Activated CD8-positive, alpha-beta T cell treated with anti-CD3 and anti-CD28 coated beads, Interleukin-2, amount 10 ng/mL, durations not matched to agents 7 days and 5 days (primary cell): ENCODE measurements at regions of chr6 and their contacts with region 1.

Region 1: GRCh38 chr6:31795616-31796298 is at the start of gene VARS1:
- DNase-seq: peak; percentile 87
- ATAC-seq: peak; percentile 88
- H3K4me3 Mint-ChIP-seq: peak within 1 kb of the TSS; percentile 97
- H3K27ac Mint-ChIP-seq: peak within 1 kb of the TSS; percentile 98
- H3K4me1 Mint-ChIP-seq: peaks cover 56% of the 10 kb centered on the region
- H3K27me3 Mint-ChIP-seq: no peaks in the 10 kb centered on the region
- total RNA-seq, gene VARS1: 114 to 115 TPM

Region 2: DNA sequence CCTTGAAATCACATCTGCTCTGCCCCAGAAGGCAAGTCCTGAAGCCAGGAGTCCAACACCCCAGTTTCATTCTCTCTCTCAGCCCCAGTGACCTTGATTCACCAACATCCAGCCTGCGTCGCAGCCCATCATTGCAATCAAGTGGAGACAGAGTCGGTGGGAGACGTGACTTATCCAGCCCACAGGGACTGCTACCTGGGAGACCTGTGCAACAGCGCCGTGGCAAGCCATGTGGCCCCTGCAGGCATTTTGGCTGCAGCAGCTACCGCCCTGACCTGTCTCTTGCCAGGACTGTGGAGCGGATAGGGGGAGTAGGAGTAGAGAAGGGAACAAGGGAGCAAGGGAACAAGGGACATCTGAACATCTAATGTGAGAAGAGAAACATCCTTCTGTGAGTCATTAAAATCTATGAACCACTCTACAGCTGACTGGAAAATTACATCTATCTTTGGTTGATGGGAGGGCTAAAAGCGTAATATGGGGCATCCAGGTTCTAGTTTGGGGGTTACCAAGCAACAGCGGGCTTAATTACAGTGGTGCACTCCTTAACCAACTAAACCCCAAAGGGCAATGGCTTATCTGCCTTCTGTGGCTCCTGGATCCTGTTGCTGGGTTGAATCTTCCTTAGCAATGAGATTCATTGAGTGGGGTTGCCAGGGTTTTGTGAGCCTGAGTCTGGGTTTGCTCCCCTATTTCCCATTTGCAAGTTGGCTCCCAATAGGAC is 78.1 kb before region 1 on chr6:
- CTCF ChIA-PET with region 1: no interaction called
- POLR2A ChIA-PET with region 1: no interaction called
- DNase-seq: no peak
- ATAC-seq: no peak
- H3K4me3 Mint-ChIP-seq: no peak overlapping the region
- H3K27ac Mint-ChIP-seq: no peak overlapping the region
- H3K4me1 Mint-ChIP-seq: peaks cover 6% of the 10 kb centered on the region
- H3K27me3 Mint-ChIP-seq: peaks cover 18% of the 10 kb centered on the region

Region 3: DNA sequence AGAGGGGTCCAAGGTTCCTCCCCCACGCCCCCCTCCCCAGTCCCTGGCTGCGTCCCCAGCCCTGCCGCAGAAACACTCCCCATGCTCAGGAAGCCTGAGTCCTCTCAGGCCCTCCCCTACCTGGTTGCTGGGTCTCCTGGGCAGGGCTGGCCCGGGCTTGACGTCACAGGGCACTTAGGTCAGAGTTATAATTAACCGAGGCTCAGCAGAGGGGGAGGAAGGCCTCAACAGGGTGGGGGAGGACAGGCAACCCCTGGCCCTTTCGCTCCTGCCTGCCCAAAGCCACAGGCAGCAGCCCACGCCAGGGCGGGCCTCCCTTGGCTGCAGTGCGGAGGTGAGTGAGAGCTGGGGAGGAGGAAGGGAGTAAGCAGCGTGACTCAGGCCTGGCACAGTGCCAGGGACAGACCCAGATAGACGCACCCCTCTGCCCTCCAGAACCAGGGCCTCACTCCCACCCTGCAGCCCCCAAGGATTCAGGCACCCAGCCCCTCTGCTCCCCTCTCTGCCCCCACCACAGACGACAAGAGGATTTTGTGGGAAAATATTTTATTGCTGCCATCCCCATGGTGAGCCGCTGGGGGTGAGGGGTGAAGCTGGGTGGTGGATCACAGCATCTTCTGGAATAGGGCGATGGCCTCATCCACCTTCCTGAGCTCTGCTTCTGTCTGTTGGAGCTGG is 18.6 kb before region 1 on chr6 and contains the start of gene VWA7:
- CTCF ChIA-PET with region 1: interaction called, 14 read pairs
- POLR2A ChIA-PET with region 1: interaction called, 3 read pairs
- DNase-seq: peak; percentile 81
- ATAC-seq: peak; percentile 80
- H3K4me3 Mint-ChIP-seq: peak within 1 kb of the TSS; percentile 50
- H3K27ac Mint-ChIP-seq: peak within 1 kb of the TSS; percentile 91
- H3K4me1 Mint-ChIP-seq: peaks cover 41% of the 10 kb centered on the region
- H3K27me3 Mint-ChIP-seq: no peaks in the 10 kb centered on the region
- total RNA-seq, gene VWA7: 6.4 to 6.6 TPM

Region 4: GRCh38 chr6:31806465-31807272 is 10.9 kb after region 1 on chr6 and contains the start of gene LSM2:
- CTCF ChIA-PET with region 1: interaction called, 46 read pairs
- POLR2A ChIA-PET with region 1: interaction called, 20 read pairs
- DNase-seq: peak; percentile 98
- ATAC-seq: peak; percentile 98
- H3K4me3 Mint-ChIP-seq: peak within 1 kb of the TSS; percentile 97
- H3K27ac Mint-ChIP-seq: peak within 1 kb of the TSS; percentile 91
- H3K4me1 Mint-ChIP-seq: peaks cover 33% of the 10 kb centered on the region
- H3K27me3 Mint-ChIP-seq: no peaks in the 10 kb centered on the region
- total RNA-seq, gene LSM2: 123 to 128 TPM

Region 5: GRCh38 chr6:32086661-32087573 is 291.2 kb after region 1 on chr6:
- CTCF ChIA-PET with region 1: no interaction called
- POLR2A ChIA-PET with region 1: no interaction called
- DNase-seq: no peak
- ATAC-seq: peak; percentile 21
- H3K4me3 Mint-ChIP-seq: no peak overlapping the region
- H3K27ac Mint-ChIP-seq: no peak overlapping the region
- H3K4me1 Mint-ChIP-seq: peaks cover 11% of the 10 kb centered on the region
- H3K27me3 Mint-ChIP-seq: peaks cover 26% of the 10 kb centered on the region